CD4-positive, alpha-beta T cell (primary cell): ENCODE measurements at regions of chr21 and their contacts with region 1.

Region 1: GRCh38 chr21:34073032-34073869 is at the starts of genes MRPS6 and SLC5A3:
- DNase-seq: peak; percentile 40 to 91 (median 64)
- ATAC-seq: peak; percentile 66
- H3K4me3 ChIP-seq: peak within 1 kb of the TSS; percentile 74
- H3K4me3 Mint-ChIP-seq: peak within 1 kb of the TSS; percentile 95
- H3K27ac ChIP-seq: peak within 1 kb of the TSS; percentile 56 to 70
- H3K27ac Mint-ChIP-seq: peak within 1 kb of the TSS; percentile 88
- H3K4me1 ChIP-seq: peaks cover 34% of the 10 kb centered on the region
- H3K4me1 Mint-ChIP-seq: peaks cover 50% of the 10 kb centered on the region
- H3K27me3 ChIP-seq: no peaks in the 10 kb centered on the region
- H3K27me3 Mint-ChIP-seq: no peaks in the 10 kb centered on the region
- CTCF ChIP-seq: no peak
- total RNA-seq, gene MRPS6: 13.5 to 14.4 TPM
- total RNA-seq, gene SLC5A3: 4.6 to 4.9 TPM

Region 2: GRCh38 chr21:33641336-33642026 is 431.8 kb before region 1 on chr21 and contains the start of gene CRYZL1:
- CTCF ChIA-PET with region 1: no interaction called
- POLR2A ChIA-PET with region 1: no interaction called
- intact Hi-C with region 1: loop called in 1 of 2 experiments (anchors 10 kb)
- DNase-seq: peak; percentile 99 to 100 (median 100)
- ATAC-seq: peak; percentile 75
- H3K4me3 ChIP-seq: peak within 1 kb of the TSS; percentile 67
- H3K4me3 Mint-ChIP-seq: peak within 1 kb of the TSS; percentile 95
- H3K27ac ChIP-seq: peak within 1 kb of the TSS; percentile 75 to 81
- H3K27ac Mint-ChIP-seq: peak within 1 kb of the TSS; percentile 85
- H3K4me1 ChIP-seq: peaks cover 18% of the 10 kb centered on the region
- H3K4me1 Mint-ChIP-seq: peaks cover 40% of the 10 kb centered on the region
- H3K27me3 ChIP-seq: peaks cover 5 to 17% of the 10 kb centered on the region in 2 experiments
- H3K27me3 Mint-ChIP-seq: peaks cover 13% of the 10 kb centered on the region
- CTCF ChIP-seq: no peak
- total RNA-seq, gene CRYZL1: 28.6 to 30.5 TPM

Region 3: DNA sequence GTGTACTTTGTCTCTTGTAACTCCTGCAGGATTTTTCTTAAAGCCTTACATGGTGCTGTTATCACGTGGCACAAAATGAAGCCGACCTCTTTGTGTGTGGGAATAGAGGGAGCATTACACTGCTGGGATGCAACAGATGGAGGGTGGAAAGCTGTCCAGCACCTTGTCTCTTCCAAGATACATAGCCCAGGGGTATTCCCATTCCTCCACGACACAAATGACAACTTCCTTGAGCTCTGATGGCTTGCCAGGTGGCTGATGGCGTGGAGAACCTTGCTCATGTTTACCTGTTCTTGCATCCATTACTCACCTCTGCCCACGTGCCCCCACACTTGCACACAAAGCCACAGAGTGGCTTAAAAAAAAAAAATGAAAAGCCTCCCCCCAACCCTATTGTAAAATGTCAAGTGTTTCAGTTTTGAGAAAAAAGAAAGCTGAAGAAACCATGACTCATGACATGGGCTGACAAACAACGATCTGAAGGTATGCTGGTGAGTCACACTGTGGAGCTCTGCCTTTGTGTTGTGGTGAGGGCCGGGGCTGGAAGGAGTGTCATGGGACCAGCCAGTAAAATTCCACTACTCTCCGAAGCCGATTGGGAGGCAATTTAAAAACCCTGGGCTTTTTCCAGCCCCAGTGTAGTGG is 125.7 kb before region 1 on chr21:
- CTCF ChIA-PET with region 1: interaction called, 12 read pairs
- POLR2A ChIA-PET with region 1: interaction called, 71 read pairs
- intact Hi-C with region 1: loop called (anchors 2 kb)
- DNase-seq: peak; percentile 68 to 97 (median 80)
- ATAC-seq: peak; percentile 59
- H3K4me3 ChIP-seq: peak overlapping the region; percentile 36
- H3K4me3 Mint-ChIP-seq: peak overlapping the region; percentile 65
- H3K27ac ChIP-seq: peak overlapping the region; percentile 93 to 98
- H3K27ac Mint-ChIP-seq: peak overlapping the region; percentile 93
- H3K4me1 ChIP-seq: peaks cover 76% of the 10 kb centered on the region
- H3K4me1 Mint-ChIP-seq: peaks cover 75% of the 10 kb centered on the region
- H3K27me3 ChIP-seq: no peaks in the 10 kb centered on the region
- H3K27me3 Mint-ChIP-seq: no peaks in the 10 kb centered on the region
- CTCF ChIP-seq: no peak

Region 4: DNA sequence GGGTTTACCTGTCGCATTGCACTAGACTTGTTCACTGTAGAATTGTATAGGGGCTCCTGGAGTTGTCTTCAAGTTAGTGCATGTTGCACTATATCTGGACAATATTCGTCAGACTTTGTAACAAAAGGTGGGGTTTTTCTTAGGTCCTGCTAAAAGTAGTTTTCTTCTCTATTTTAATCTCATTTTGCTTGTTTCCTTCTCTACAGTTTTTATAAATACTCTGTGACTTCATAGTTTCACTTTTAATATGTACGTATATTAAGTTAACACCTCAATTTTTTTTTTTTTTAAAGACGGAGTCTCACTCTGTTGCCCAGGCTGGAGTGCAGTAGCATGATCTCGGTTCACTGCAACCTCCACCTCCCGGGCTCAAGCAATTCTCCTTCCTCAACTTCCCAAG is 26.3 kb before region 1 on chr21:
- CTCF ChIA-PET with region 1: no interaction called
- POLR2A ChIA-PET with region 1: no interaction called
- intact Hi-C with region 1: no loop called
- DNase-seq: peak in 1 of 14 experiments; percentile 41
- ATAC-seq: no peak
- H3K4me3 ChIP-seq: peak overlapping the region; percentile 15
- H3K4me3 Mint-ChIP-seq: peak overlapping the region; percentile 38
- H3K27ac ChIP-seq: no peak overlapping the region
- H3K27ac Mint-ChIP-seq: no peak overlapping the region
- H3K4me1 ChIP-seq: no peaks in the 10 kb centered on the region
- H3K4me1 Mint-ChIP-seq: peaks cover 4% of the 10 kb centered on the region
- H3K27me3 ChIP-seq: no peaks in the 10 kb centered on the region
- H3K27me3 Mint-ChIP-seq: no peaks in the 10 kb centered on the region
- CTCF ChIP-seq: no peak

Region 5: DNA sequence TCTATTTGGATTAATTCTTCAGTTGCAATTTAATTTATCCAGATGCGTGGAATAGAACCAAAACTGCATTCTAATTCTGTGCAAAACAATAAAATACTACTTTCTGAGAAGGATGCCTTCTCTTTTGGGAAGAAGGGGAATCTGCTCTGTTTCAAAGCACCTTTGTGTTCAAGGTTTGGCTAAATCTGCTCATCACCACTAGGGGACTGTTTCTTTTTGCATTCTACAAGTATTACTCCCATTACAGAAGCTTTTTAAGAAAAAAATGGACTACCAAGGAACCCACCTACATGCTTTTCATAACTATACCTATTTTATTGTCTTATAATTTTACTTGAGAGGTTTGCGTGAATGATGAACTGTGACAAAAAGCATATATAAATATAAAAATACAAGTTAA is 18.4 kb after region 1 on chr21:
- CTCF ChIA-PET with region 1: interaction called, 18 read pairs
- POLR2A ChIA-PET with region 1: interaction called, 21 read pairs
- intact Hi-C with region 1: no loop called
- DNase-seq: peak in 1 of 14 experiments; percentile 22
- ATAC-seq: no peak
- H3K4me3 ChIP-seq: no peak overlapping the region
- H3K4me3 Mint-ChIP-seq: peak overlapping the region; percentile 2
- H3K27ac ChIP-seq: no peak overlapping the region
- H3K27ac Mint-ChIP-seq: peak overlapping the region; percentile 33
- H3K4me1 ChIP-seq: peaks cover 14% of the 10 kb centered on the region
- H3K4me1 Mint-ChIP-seq: peaks cover 66% of the 10 kb centered on the region
- H3K27me3 ChIP-seq: no peaks in the 10 kb centered on the region
- H3K27me3 Mint-ChIP-seq: no peaks in the 10 kb centered on the region
- CTCF ChIP-seq: peak; percentile 34

Region 6: DNA sequence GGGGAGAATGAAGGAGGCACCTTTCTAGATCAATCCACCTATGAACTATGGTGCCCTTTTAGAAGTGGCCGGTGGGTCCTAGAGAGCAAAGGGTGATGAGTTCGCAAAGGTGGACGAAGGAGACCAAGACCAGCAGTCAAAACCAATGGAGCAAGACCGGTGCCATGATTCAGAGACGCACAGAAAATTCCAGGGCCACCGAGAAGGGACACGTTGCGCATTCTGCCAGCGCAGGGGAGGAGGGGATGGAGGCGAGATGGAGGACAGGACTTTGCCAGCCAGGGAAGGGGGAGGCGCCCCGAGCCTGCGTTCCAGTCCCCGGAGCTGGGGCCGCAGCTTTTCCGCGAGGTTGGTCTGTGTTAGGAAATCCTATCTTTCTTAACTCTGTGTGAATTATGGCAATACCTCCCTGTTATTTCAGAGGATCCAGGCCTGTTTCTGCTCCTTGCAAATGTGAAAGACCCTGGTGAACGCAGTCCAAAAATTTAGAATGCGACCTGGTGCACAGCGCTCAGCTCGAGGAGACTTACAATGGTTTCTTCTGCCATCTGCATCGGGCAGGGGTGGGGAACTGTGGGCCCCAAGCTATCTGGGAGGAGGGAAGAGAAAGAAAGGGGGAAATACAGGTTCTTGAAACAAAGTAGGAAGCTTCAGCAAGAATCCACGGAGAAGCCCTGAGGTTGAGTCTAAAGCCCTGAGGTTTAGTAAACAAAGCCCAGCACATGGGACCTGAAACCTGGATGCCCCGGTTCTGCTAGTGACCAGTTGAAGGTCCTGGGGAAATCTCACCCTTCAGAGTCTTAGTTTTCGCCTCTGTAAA is 129.5 kb after region 1 on chr21:
- CTCF ChIA-PET with region 1: interaction called, 6 read pairs
- POLR2A ChIA-PET with region 1: interaction called, 5 read pairs
- intact Hi-C with region 1: loop called (anchors 5 kb)
- DNase-seq: peak in 3 of 14 experiments; percentile 7 to 33 (median 32)
- ATAC-seq: peak; percentile 21
- H3K4me3 ChIP-seq: peak overlapping the region; percentile 54
- H3K4me3 Mint-ChIP-seq: peak overlapping the region; percentile 84
- H3K27ac ChIP-seq: no peak overlapping the region
- H3K27ac Mint-ChIP-seq: peak overlapping the region; percentile 48
- H3K4me1 ChIP-seq: peaks cover 49% of the 10 kb centered on the region
- H3K4me1 Mint-ChIP-seq: peaks cover 52% of the 10 kb centered on the region
- H3K27me3 ChIP-seq: no peaks in the 10 kb centered on the region
- H3K27me3 Mint-ChIP-seq: no peaks in the 10 kb centered on the region
- CTCF ChIP-seq: no peak

Region 7: DNA sequence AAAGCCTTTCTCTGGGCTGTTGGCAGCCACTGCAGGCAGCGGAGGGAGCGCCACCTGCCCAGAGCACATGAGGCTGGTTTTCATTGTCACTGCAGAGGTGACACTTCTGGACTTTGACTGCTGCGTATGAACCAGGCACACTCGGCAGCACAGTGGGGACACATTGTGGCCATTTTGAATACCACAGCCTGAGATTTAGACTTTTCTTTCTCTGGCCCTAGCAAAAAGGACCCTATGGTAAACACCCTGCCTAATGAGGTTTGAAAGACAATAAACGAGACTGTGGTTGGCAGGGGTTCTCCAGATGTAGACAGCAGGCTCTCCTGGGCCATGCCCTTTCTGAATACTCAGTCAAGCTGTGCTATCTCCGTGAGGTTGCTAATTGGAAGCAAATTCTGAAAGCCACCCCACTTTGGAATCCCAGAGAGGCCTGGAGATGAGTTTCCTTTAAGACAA is 278.6 kb after region 1 on chr21:
- CTCF ChIA-PET with region 1: interaction called, 9 read pairs
- POLR2A ChIA-PET with region 1: interaction called, 3 read pairs
- intact Hi-C with region 1: loop called (anchors 1 to 5 kb)
- DNase-seq: peak in 7 of 14 experiments; percentile 2 to 49 (median 9)
- ATAC-seq: peak; percentile 53
- H3K4me3 ChIP-seq: no peak overlapping the region
- H3K4me3 Mint-ChIP-seq: no peak overlapping the region
- H3K27ac ChIP-seq: no peak overlapping the region
- H3K27ac Mint-ChIP-seq: no peak overlapping the region
- H3K4me1 ChIP-seq: peaks cover 4% of the 10 kb centered on the region
- H3K4me1 Mint-ChIP-seq: peaks cover 10% of the 10 kb centered on the region
- H3K27me3 ChIP-seq: peaks cover 0 to 2% of the 10 kb centered on the region in 2 experiments
- H3K27me3 Mint-ChIP-seq: peaks cover 7% of the 10 kb centered on the region
- CTCF ChIP-seq: no peak